ENCODE measurements at regions of chr13 and their contacts with region 1.

Region 1: GRCh38 chr13:92609376-92609775 is 617.2 kb upstream of the GPC6 start:
- DNase-seq: no peak
- ATAC-seq: no peak

Region 2: DNA sequence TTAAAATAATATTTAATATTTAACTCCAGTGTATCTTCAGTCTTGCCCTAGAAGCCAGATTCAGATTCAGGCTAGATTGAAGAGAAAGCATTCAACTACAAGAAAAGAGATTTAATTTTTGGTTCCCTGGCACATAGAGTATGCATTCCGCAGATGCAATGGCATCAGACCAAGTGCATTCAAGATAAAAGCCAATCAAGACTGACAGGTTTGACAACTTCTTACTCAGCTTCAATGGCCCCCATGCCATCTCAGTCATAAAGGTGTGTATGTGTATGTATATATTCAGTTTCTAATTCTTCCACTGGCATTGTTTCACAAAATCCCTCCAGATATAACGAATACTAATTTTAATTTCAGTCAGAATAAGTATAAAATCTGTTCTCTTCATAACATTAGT is 33.6 kb before region 1 on chr13:
- intact Hi-C with region 1: loop called (anchors 1 kb)
- DNase-seq: no peak
- ATAC-seq: no peak

Region 3: DNA sequence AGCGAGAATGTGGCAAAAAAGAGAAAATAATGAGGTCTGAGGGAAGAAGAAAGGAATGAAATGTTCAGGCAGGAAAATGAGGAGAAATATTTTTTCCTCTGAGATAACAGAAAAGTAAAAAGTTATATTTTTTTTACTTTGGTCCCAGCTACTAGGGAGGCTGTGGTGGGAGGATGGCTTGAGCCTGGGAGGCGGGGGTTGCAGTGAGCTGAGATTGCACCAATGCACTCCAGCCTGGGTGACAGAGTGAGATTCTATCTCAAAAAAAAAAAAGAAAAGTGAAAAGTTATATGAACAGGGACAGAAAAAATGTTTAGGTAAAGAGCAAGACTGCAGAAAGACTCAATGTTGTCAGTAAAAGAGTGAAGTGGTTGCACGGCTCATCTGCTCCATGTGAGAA is 13.5 kb after region 1 on chr13:
- intact Hi-C with region 1: no loop called
- DNase-seq: no peak
- ATAC-seq: no peak